GM10248 (cell line): ENCODE measurements at regions of chr6 and their contacts with region 1.

Region 1: GRCh38 chr6:134002821-134003220 is 49.6 kb downstream of the SLC2A12 start:
- DNase-seq: no peak
- CTCF ChIP-seq: no peak

Region 2: GRCh38 chr6:133991096-133991593 is 11.7 kb before region 1 on chr6:
- CTCF ChIA-PET with region 1: interaction called, 28 read pairs
- POLR2A ChIA-PET with region 1: no interaction called
- DNase-seq: no peak
- CTCF ChIP-seq: no peak

Region 3: GRCh38 chr6:134021396-134022122 is 18.7 kb after region 1 on chr6:
- CTCF ChIA-PET with region 1: interaction called, 12 read pairs
- POLR2A ChIA-PET with region 1: no interaction called
- DNase-seq: peak; percentile 12
- CTCF ChIP-seq: no peak

Region 4: DNA sequence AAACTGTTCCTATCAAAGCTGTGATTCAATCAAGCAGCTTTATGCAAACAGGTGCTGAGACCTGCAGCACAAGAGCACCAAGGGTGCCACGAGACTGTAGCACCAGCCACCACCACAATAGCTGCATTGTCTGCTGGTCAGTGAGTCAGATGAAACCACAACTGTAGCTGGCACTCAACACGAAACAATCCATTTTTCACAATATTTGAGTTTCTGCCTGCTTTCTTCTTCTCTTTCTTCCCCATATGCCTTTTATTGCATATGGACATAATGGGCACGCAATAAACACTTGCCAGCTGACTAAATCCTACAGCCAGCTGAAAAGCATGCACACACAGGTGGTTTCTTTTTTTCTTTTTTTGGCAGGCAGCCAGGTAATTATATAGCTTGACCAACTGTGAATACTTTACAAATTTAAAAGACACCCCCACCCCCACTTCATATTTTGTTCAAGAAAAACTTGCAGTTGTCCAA is 33.0 kb after region 1 on chr6:
- CTCF ChIA-PET with region 1: no interaction called
- POLR2A ChIA-PET with region 1: no interaction called
- DNase-seq: no peak
- CTCF ChIP-seq: no peak